ENCODE measurements at regions of chr7 and their contacts with region 1.

Region 1: GRCh38 chr7:102404005-102404861 is 8.1 kb downstream of the PRKRIP1 start:
- DNase-seq: peak; percentile 60
- H3K4me3 Mint-ChIP-seq: no peak overlapping the region
- H3K27ac Mint-ChIP-seq: no peak overlapping the region
- H3K4me1 Mint-ChIP-seq: peaks cover 7% of the 10 kb centered on the region
- H3K27me3 Mint-ChIP-seq: no peaks in the 10 kb centered on the region

Region 2: DNA sequence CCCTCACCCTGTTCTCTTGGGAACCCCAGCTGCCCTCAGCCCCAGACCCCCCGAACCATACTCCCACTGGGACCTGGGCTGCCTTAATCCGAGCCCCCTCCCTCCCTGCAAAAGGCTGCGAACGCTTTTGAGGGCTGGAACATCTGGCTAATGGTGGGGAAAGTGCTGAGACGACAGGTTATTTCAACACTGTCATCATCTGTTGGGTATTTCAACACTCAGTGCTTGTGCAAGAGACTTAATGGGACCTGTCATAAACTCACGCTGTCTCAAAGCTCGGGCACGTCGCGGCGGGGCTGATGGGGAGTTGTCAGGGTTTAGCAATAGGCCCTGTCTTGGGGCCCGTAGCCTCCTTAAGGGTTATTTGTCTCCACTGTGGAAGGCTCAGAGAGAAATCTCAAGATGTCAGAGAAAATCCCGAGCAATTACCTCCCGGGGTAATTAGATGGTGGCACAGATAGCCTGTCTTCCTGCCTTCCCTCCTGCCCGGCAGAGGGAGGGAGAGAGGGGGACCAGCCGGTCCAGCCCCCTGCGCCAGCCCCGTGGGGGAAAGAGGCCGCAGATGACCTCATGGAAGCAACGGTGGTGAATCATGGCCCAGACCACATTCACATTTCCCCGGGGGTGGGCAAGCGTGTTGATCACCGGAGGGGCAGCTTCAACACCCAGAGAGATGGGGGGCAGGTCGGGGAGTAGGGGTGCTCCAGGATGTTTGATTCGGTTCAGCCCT is 686.4 kb before region 1 on chr7:
- CTCF ChIA-PET with region 1: no interaction called
- DNase-seq: no peak
- H3K4me3 Mint-ChIP-seq: no peak overlapping the region
- H3K27ac Mint-ChIP-seq: no peak overlapping the region
- H3K4me1 Mint-ChIP-seq: no peaks in the 10 kb centered on the region
- H3K27me3 Mint-ChIP-seq: peaks cover 18% of the 10 kb centered on the region

Region 3: GRCh38 chr7:102079140-102080018 is 324.9 kb before region 1 on chr7:
- CTCF ChIA-PET with region 1: no interaction called
- DNase-seq: no peak
- H3K4me3 Mint-ChIP-seq: no peak overlapping the region
- H3K27ac Mint-ChIP-seq: no peak overlapping the region
- H3K4me1 Mint-ChIP-seq: peaks cover 4% of the 10 kb centered on the region
- H3K27me3 Mint-ChIP-seq: no peaks in the 10 kb centered on the region

Region 4: GRCh38 chr7:102260856-102261255 is 143.4 kb before region 1 on chr7:
- CTCF ChIA-PET with region 1: no interaction called
- DNase-seq: no peak
- H3K4me3 Mint-ChIP-seq: no peak overlapping the region
- H3K27ac Mint-ChIP-seq: no peak overlapping the region
- H3K4me1 Mint-ChIP-seq: no peaks in the 10 kb centered on the region
- H3K27me3 Mint-ChIP-seq: no peaks in the 10 kb centered on the region

Region 5: DNA sequence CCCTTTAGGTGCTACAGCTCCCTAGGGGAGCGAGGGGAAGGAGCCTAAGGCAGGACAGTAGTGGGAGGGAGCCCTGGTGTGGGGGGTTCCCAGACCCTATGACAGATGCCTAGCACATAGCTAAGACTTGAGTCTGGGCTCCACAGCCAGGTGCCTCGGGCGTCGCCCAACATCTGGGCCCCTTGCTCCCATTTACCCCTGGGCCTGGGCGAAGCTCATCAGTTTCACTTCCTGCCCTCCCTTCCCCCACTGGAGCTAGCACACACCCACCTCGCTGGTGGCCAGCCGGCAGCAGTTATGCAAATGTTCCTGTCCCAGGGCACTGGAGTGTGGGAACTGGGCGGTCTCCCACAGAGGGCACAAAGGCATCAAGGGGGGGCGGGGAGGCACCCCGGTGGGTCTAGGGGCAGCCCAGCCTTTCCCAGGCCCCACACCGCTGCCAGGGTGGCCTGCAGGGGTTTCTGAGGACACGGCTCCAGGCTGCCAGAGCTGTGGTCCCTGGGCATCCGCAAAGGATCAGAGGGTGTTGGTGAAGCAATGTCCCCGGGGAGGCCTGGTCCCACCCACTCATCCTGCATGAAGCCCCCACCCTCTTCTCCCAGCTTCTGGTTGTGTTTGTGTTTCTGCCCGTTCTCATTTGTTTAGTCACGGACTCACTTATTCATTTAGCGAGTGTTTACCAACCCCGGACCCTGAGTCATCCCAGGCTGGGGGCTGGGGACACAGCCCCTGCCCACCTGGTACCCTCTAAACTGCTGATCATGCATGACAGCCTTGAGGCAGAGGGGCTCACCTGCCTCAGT is 97.2 kb before region 1 on chr7:
- CTCF ChIA-PET with region 1: no interaction called
- DNase-seq: peak; percentile 62
- H3K4me3 Mint-ChIP-seq: no peak overlapping the region
- H3K27ac Mint-ChIP-seq: peak overlapping the region; percentile 42
- H3K4me1 Mint-ChIP-seq: peaks cover 16% of the 10 kb centered on the region
- H3K27me3 Mint-ChIP-seq: no peaks in the 10 kb centered on the region

Region 6: DNA sequence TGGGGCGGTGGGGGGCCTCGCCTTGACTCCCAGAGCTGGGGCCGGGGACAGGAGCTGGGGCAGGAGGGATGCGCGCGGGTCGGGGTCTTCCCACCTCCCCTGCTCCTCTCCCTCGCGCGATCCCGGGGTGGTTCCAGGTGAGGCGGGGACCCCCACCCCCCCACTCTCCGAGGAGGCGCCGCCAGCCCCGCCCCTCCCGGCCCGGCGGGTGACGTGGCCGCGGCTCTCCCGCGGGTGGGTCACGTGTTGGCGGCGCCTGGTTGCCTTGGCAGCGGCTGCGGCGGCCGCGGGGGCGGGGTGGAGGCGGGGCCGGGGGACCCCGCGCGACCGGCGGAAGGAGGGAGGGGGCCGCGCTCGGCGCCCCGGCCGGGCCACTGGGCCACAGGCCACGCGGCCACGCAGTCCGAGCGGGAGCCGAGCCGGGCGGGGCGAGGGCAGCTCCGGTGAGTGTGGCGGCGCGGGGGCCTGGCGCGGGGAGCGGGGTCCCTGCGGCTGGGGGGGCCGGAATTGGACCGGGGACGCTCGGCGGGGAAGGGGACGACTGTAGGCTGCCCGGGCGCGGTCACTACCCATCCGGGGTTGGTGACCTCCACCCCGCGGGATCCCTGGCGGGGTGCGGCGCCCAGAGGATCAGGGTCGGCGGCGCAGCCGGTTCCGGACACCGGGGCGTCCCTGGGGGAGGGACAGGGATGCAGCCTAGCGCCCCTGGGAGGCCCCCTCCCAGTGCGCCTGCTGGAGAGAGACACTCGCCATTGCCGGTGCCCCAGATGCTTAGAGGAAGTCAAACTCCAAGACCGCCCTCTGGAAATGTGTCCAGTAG is 29.2 kb after region 1 on chr7 and contains the start of gene ORAI2:
- CTCF ChIA-PET with region 1: interaction called, 13 read pairs
- DNase-seq: peak; percentile 89
- H3K4me3 Mint-ChIP-seq: peak within 1 kb of the TSS; percentile 87
- H3K27ac Mint-ChIP-seq: peak within 1 kb of the TSS; percentile 98
- H3K4me1 Mint-ChIP-seq: peaks cover 72% of the 10 kb centered on the region
- H3K27me3 Mint-ChIP-seq: no peaks in the 10 kb centered on the region

Region 7: DNA sequence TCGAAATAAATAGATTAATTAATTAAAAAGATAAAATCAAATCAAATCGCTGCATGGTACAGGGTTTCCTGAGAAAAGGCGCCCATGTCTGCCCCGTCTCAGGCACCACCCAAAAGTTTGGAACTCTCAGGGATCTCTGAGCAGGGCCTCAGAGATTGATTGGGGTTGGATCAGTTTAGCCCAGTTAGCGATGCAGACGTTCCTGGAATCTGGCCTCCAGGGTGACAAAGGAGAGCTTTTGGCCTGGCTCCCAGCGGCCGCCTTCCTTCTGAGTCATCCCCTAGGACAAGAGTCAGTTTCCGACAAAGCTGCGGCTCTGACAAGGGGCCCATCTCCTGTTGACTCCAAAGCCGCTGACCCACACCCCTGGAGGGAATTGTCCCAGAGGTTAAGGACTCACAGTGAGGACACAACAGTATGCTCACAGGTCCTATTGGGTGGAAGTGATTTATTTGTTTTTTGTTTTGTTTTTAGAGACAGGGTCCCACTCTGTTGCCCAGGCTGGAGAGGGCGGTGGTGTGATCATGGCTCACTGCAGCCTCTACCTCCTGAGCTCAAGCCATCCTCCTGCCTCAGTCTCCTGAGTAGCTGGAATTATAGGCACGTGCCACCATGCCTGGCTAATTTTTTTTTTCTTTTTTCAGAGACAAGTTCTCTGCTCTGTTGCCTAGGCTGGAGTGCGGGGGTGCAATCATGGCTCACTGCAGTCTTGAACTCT is 36.0 kb after region 1 on chr7:
- CTCF ChIA-PET with region 1: interaction called, 13 read pairs
- DNase-seq: no peak
- H3K4me3 Mint-ChIP-seq: no peak overlapping the region
- H3K27ac Mint-ChIP-seq: no peak overlapping the region
- H3K4me1 Mint-ChIP-seq: peaks cover 22% of the 10 kb centered on the region
- H3K27me3 Mint-ChIP-seq: no peaks in the 10 kb centered on the region

Region 8: GRCh38 chr7:102450242-102450641 is 46.0 kb after region 1 on chr7:
- CTCF ChIA-PET with region 1: interaction called, 15 read pairs
- DNase-seq: peak; percentile 61
- H3K4me3 Mint-ChIP-seq: no peak overlapping the region
- H3K27ac Mint-ChIP-seq: no peak overlapping the region
- H3K4me1 Mint-ChIP-seq: no peaks in the 10 kb centered on the region
- H3K27me3 Mint-ChIP-seq: no peaks in the 10 kb centered on the region

Region 9: GRCh38 chr7:102464577-102465280 is 60.5 kb after region 1 on chr7 and contains the starts of genes ALKBH4 and LRWD1:
- CTCF ChIA-PET with region 1: interaction called, 28 read pairs
- DNase-seq: peak; percentile 95
- H3K4me3 Mint-ChIP-seq: peak within 1 kb of the TSS; percentile 95
- H3K27ac Mint-ChIP-seq: peak within 1 kb of the TSS; percentile 47
- H3K4me1 Mint-ChIP-seq: peaks cover 35% of the 10 kb centered on the region
- H3K27me3 Mint-ChIP-seq: no peaks in the 10 kb centered on the region

Measured in activated naive CD4-positive, alpha-beta T cell treated with anti-CD3 and anti-CD28 coated beads, Interleukin-2, amount 10 ng/mL, durations not matched to agents 7 days and 5 days (primary cell).